GM13976 (cell line): ENCODE measurements at regions of chr2 and their contacts with region 1.

Region 1: GRCh38 chr2:64144057-64145013 is at the start of gene PELI1:
- DNase-seq: peak; percentile 95
- CTCF ChIP-seq: peak; percentile 58

Region 2: GRCh38 chr2:63993871-63994270 is 150.5 kb before region 1 on chr2:
- in situ Hi-C with region 1: no loop called
- DNase-seq: no peak
- CTCF ChIP-seq: no peak

Region 3: DNA sequence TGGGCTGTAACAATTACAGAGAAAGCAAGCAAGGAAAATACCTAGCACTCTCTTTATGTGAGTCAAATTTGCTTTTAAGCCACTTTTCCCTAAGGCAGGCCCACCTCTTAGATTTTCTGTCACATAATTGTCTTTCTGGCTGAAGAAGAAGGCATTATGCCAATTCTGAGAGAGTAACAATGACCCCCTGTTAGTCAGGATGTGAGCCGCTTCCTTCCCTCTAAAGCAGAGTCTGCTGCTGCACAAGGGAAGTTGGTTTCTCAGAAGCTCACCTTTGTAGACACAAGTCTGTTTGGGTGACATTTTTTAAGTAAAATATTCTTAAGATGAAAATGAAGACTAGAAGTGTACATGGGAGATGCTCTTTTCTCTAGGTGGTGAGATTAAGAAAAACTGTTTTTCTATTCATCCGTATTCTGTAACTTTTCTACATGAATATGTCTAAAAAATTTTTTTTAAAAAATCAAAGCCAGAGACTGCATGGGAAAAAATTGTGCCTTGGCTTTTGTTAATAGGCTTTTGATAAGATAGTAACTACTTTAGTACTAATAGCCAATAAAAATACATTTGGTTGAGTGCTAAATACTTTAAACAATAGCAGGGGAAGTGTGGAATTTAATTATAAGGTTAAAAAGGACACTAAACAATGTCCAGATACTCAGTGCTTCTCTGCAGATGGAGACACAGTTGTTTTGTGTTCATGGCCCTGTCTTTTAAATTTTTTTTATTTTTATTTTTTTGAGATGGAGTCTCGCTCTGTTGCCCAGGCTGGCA is 91.7 kb before region 1 on chr2:
- in situ Hi-C with region 1: loop called (anchors 5 kb)
- DNase-seq: no peak
- CTCF ChIP-seq: no peak